Motor neuron (in vitro differentiated cells): ENCODE measurements at regions of chr4 and their contacts with region 1.

Region 1: DNA sequence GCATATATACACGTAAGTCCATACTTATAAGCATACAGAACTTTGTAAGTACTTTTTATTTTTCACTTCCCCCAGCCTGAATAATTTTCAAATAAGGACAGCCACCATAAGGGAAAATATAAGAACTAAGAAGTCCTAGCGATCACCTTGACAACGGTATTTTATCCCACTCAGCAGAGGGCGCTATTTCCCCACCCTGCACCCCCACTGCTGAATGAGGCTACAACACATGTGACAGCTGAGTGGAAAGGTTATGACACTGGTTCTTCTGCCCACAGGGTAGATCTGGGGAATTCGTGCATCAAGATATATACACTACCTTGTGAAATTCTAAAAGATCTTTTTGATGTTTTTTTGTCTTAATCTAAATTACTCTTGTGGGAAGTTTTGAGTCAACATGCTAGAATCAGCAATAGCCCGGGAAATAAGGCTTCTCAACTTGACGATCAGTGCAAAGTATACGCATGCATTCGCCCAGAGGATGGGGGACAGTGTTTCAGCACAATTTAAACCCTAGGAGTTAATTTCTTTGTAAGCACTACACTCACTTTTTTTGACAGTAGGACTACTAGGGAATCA is 151.5 kb downstream of the CORIN start:
- ATAC-seq: peak in 5 of 8 experiments; percentile 32 to 75 (median 63)
- H3K4me3 ChIP-seq: no peak overlapping the region
- H3K27ac ChIP-seq: no peak overlapping the region
- H3K4me1 ChIP-seq: no peaks in the 10 kb centered on the region

Region 2: GRCh38 chr4:47383829-47384427 is 302.5 kb before region 1 on chr4:
- in situ Hi-C with region 1: no loop called
- ATAC-seq: peak in 1 of 8 experiments; percentile 36
- H3K4me3 ChIP-seq: no peak overlapping the region
- H3K27ac ChIP-seq: no peak overlapping the region
- H3K4me1 ChIP-seq: peaks cover 6 to 24% of the 10 kb centered on the region in 2 donors

Region 3: DNA sequence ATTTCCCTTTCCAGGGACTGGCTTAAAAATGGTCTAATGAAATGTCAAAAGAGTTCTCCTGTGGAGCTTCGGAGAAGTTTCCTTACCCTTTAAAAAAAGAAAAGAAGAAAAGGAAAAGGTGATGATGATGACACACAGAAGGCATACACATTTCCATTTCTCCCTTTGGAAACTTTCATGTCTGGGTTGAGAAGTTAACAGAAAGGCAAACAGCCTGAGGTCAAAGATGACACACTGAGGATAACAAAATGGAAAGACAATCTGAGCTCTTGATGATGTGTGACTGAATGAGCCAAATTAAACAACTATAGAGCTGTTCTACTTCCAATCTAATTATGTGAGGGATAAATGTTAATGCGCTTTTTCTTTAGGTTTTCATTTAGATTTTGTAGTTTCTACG is 195.8 kb after region 1 on chr4:
- in situ Hi-C with region 1: no loop called
- ATAC-seq: no peak
- H3K4me3 ChIP-seq: no peak overlapping the region
- H3K27ac ChIP-seq: no peak overlapping the region
- H3K4me1 ChIP-seq: no peaks in the 10 kb centered on the region

Region 4: DNA sequence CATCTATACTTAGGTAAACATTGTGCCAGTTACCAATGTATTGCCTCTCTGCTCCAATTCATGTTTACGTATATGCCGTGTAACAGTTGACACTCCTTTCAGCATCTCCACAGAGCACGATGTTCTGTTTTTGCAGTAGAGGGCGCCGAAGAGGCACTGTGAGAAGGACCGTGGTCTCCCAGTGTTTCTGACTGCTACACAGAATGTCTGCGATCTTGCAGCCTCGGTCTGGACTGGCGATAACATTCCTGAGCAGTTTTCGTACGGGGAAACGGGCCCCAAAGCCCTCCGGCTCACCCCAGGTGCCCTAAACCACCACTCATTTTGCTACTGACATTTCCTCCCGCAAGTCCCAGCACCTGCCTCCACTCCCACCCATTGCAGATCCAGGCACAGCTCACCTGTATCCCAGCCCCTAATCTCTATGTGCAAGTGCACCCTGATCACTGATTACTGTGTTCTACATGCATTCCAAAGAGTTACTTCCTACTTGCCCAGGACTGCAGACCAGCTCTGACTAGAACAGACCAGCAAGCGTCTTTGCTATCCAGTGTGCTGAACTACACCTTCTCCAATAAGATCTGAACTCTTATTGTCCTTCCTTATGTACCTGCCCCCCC is 240.4 kb after region 1 on chr4:
- in situ Hi-C with region 1: loop called in 2 of 9 experiments (anchors 25 kb)
- ATAC-seq: peak; percentile 79 to 100 (median 99)
- H3K4me3 ChIP-seq: peak overlapping the region in 2 of 5 donors; percentile 16 to 20
- H3K27ac ChIP-seq: no peak overlapping the region
- H3K4me1 ChIP-seq: no peaks in the 10 kb centered on the region